Naive thymus-derived CD4-positive, alpha-beta T cell (primary cell): ENCODE measurements at regions of chr10 and their contacts with region 1.

Region 1: GRCh38 chr10:117320050-117320665 is 55.1 kb downstream of the PDZD8 start:
- DNase-seq: peak in 4 of 9 donors; percentile 11 to 34 (median 17)
- ATAC-seq: no peak
- H3K4me3 ChIP-seq: no peak overlapping the region
- H3K4me3 Mint-ChIP-seq: no peak overlapping the region
- H3K27ac ChIP-seq: no peak overlapping the region
- H3K27ac Mint-ChIP-seq: no peak overlapping the region
- H3K4me1 ChIP-seq: no peaks in the 10 kb centered on the region
- H3K4me1 Mint-ChIP-seq: peaks cover 0 to 10% (median 6%) of the 10 kb centered on the region in 7 donors
- H3K27me3 ChIP-seq: no peaks in the 10 kb centered on the region
- H3K27me3 Mint-ChIP-seq: no peaks in the 10 kb centered on the region

Region 2: GRCh38 chr10:117186832-117187615 is 133.1 kb before region 1 on chr10:
- CTCF ChIA-PET with region 1: no interaction called
- POLR2A ChIA-PET with region 1: no interaction called
- intact Hi-C with region 1: no loop called
- DNase-seq: peak in 1 of 9 donors; percentile 27
- ATAC-seq: no peak
- H3K4me3 ChIP-seq: no peak overlapping the region
- H3K4me3 Mint-ChIP-seq: no peak overlapping the region
- H3K27ac ChIP-seq: no peak overlapping the region
- H3K27ac Mint-ChIP-seq: no peak overlapping the region
- H3K4me1 ChIP-seq: no peaks in the 10 kb centered on the region
- H3K4me1 Mint-ChIP-seq: no peaks in the 10 kb centered on the region
- H3K27me3 ChIP-seq: no peaks in the 10 kb centered on the region
- H3K27me3 Mint-ChIP-seq: peaks cover 0 to 11% (median under 1%) of the 10 kb centered on the region in 5 donors

Region 3: DNA sequence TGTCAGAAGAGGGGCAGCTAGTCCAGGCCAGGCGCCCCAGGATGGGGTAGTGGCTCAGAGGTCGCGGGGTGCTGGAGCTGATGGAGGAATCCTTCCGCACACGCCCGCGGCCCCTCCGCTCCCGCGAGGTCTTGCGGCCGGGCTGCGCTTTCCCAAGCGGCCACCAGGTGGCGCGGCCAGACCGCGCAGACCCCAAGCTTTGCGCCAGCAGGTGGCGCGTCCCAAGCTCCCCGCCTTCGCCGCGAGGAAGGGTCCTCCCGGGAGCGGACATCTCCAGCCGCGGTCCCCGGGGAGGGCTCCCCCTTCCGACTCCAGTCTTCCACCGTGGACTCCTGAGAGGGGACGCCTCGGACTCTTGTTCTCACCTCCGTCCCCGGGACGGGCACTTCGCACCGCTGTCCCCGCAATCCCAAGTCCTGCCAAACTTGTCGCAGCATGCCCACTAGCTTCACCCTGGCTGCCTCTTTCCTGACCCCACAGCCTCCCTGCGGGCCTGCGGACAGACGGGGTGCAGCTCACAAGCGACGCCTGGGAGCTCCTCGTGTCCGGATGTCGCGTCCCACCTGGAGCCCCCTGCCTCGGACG is 103.5 kb before region 1 on chr10:
- CTCF ChIA-PET with region 1: interaction called, 40 read pairs
- POLR2A ChIA-PET with region 1: no interaction called
- intact Hi-C with region 1: loop called (anchors 1 kb)
- DNase-seq: peak; percentile 27 to 81 (median 64)
- ATAC-seq: peak; percentile 92
- H3K4me3 ChIP-seq: peak overlapping the region; percentile 62
- H3K4me3 Mint-ChIP-seq: peak overlapping the region; percentile 71 to 86 (median 80)
- H3K27ac ChIP-seq: no peak overlapping the region
- H3K27ac Mint-ChIP-seq: no peak overlapping the region
- H3K4me1 ChIP-seq: peaks cover 6 to 10% of the 10 kb centered on the region in 2 donors
- H3K4me1 Mint-ChIP-seq: peaks cover 0 to 9% (median 7%) of the 10 kb centered on the region in 7 donors
- H3K27me3 ChIP-seq: peaks cover 3 to 6% of the 10 kb centered on the region in 2 donors
- H3K27me3 Mint-ChIP-seq: peaks cover 21 to 45% (median 37%) of the 10 kb centered on the region in 5 donors

Region 4: DNA sequence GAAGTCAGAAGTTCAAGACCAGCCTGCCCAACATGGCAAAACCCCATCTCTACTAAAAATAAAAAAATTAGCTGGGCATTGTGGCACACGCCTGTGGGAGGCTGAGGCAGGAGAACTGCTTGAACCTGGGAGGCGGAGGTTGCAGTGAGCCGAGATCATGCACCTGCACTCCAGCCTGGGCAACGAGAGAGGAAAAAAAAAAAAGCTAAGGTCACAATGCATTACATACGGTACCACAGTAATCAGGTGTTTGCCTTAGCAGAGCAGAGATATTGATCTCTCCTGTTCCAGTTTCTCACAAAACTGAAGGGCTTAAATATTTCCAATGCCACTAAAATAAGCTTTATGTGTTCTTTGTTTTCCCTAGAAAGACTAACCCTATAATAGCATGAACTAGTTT is 47.6 kb after region 1 on chr10:
- CTCF ChIA-PET with region 1: interaction called, 3 read pairs
- POLR2A ChIA-PET with region 1: no interaction called
- intact Hi-C with region 1: loop called in 1 of 2 experiments (anchors 2 kb)
- DNase-seq: no peak
- ATAC-seq: no peak
- H3K4me3 ChIP-seq: no peak overlapping the region
- H3K4me3 Mint-ChIP-seq: peak overlapping the region in 2 of 10 donors; percentile 18 to 33
- H3K27ac ChIP-seq: no peak overlapping the region
- H3K27ac Mint-ChIP-seq: no peak overlapping the region
- H3K4me1 ChIP-seq: peaks cover 14 to 21% of the 10 kb centered on the region in 2 donors
- H3K4me1 Mint-ChIP-seq: peaks cover 53 to 92% (median 83%) of the 10 kb centered on the region in 7 donors
- H3K27me3 ChIP-seq: no peaks in the 10 kb centered on the region
- H3K27me3 Mint-ChIP-seq: no peaks in the 10 kb centered on the region

Region 5: DNA sequence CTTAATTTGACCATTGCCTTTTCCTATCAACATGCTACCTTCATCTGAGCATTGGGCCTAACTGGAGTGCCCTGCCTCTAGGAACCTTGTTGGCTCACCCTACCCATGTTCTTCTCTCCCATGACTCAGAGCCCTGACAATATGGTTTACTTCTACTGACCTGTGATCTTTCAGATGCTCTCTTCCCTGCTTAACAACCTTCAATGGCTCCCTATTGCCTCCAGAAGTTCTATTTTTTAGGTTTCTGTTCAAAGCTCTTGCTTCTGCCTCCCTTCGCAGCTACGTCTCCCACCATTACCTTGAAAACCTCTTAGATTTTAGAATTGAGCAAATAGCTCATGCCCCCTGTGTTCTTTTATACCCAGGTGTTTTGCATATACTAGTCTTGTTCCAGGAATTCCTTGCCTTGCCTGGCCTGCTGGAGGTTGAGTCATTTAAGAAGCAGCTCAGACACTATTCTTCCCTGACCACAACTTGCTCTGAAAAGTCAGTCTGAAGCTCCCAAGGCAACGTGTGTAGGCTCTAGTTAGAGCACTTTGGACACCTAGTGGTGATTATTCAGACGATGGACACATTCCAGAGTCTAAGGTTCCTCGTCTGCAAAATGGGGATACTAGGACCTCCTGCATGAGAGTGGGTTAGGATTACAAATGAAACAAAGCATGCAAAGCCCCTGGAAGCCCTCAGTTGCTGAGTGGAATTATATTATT is 158.0 kb after region 1 on chr10:
- CTCF ChIA-PET with region 1: no interaction called
- POLR2A ChIA-PET with region 1: no interaction called
- intact Hi-C with region 1: no loop called
- DNase-seq: no peak
- ATAC-seq: no peak
- H3K4me3 ChIP-seq: no peak overlapping the region
- H3K4me3 Mint-ChIP-seq: no peak overlapping the region
- H3K27ac ChIP-seq: no peak overlapping the region
- H3K27ac Mint-ChIP-seq: no peak overlapping the region
- H3K4me1 ChIP-seq: no peaks in the 10 kb centered on the region
- H3K4me1 Mint-ChIP-seq: peaks cover 0 to 5% (median 0%) of the 10 kb centered on the region in 7 donors
- H3K27me3 ChIP-seq: no peaks in the 10 kb centered on the region
- H3K27me3 Mint-ChIP-seq: peaks cover 0 to 40% (median 37%) of the 10 kb centered on the region in 5 donors